Cardiac septum (tissue), 1 donor: ENCODE measurements at regions of chr6 and their contacts with region 1.

Region 1: DNA sequence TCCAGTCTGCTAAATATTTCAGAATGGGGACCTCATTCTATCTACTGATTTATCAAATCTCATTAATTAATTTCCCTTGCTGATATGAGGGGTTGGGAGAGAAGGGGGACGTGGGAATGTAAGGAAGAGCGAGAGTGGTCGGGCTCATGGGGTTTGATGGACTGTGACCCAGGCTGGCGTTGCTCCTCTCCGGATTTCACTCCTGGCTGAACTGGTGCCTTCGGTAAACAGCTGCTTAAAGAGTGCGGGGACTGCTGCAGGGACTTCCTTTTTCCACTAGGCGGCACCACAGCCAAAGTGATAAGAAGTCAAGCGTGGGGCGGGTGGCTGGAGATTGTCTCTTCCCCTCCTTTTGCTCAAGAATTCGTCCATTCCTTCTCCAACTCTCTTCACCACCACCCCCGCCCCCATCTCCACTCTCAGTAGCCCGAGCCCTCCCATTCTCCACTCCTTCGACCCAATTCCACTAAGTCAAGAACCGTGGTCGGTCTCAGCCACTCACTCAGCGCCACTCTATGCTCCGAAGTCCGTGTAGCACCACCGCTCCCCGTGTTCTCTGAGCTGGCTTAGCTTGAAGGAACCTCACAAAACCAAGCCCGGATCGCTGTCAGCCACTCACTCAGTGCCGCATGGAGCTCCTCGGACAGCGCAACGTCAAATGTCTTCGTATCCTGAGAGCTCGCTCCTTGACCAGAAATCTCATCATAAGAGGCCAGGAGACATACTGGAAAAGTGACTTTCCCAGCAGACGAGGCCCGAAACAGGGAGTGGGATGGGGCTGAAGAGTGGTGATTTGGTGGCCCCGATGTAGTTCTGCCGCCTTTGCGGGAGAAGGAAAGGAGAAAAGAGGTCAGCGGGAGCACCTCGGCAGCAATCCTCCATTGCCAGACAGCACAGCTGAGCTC is 9.7 kb downstream of the TRIM31 start:
- DNase-seq: peak; percentile 89

Region 2: DNA sequence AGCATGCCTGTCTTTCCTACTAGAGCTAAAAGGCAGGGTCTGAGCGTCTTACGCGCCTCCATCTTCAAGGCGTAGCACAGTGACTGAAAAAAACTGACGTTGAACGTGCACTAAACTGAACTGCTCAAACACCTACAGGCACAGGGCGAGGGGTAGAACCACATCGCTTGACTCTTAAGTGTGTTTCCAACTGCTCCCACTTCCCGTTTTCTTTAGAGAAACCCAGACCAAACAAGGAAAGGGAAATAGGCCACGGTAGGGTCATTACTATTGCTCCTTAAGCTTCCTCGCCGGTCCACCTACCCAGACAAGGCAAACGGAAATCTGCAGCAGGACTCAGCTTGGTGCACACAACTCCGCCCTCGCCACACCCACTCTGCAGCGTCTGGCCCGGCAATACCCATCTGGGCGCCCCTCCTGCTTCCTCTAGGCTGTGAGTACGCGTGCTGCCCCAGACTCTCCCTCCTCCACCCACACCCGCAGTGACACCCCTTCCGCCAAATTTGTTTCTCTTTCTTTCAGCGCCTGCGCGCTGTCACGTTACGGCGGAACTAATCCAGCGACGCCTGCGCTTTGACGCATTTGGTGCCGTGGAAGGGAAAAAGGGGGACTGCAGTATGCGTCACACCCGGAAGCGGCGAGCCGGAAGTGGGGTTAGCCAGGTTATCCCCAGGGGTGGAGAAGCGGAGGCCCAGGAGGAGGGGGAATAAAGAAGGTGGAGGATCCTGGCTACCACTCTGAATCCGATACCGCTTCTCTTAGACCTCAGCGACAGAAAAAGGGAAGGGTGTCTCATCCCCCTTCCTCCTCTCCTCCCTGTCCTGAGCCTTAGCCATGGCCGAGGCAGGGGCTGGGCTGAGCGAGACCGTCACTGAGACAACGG is 36.4 kb before region 1 on chr6 and contains the start of gene PPP1R11:
- intact Hi-C with region 1: loop called (anchors 2 kb)
- DNase-seq: peak; percentile 99
- total RNA-seq, gene PPP1R11: 41.4 TPM

Region 3: DNA sequence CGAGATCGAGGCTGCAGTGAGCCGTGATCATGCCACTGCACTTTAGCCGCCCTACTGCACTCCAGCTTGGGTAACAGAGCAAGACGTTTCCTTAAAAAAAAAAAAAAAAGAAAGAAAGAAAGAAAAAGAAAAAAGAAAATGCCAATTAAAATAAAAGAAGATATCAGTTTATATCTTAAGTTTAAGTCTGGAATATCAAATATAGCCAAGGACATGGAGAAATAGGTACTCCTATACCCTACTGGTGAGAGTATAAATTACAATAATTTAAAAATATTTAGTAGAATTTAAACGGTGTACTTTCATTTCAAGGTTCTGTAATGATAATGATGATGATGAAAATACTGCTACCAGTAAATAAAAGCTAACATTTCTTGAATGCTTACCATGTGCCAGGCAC is 13.5 kb after region 1 on chr6:
- intact Hi-C with region 1: no loop called
- DNase-seq: no peak

Region 4: DNA sequence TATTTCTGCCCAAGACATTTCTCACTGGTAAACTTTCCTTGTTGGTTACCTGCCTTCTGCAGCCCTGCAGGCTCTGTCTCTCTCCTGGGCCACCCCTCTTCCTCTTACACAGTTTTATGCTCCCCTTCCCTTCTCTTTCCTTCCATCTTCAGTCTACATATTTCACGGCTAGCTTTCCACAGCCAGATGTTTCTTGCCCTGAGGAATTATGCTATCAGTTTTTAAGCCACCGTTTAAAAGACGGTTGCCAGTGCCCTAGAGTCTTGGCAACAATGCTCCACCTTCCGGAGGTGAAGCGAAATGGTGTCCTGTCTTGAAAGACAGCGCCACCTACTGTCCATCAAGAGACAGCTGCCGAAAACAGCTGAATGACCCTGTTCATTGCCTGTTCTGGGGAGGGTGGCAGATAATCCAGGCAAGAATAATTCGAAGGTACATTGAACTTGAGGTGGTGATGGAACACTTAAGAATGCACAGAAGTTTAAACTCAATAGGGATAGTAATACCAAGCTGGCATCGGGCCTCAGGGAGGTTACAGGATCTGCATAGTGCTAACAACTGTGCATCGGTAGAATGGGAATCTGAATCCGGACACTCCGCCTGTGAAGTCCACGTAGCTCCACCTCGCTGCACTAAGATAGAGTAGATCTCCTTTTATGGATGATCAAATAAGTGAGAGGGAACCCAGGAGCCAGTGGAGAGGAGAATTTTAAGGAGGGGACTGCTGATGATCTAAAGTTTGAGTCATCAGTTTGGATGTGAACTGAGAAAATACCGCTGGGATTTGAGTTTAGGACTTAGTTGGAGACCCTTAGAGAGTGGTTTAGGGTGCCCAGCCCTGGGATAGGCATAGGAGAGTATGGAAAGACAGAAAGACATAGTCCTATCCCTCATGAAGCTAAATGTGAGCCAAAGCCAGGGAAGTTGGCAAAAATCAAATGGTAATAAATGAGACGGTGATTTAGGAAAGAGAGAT is 28.0 kb after region 1 on chr6:
- intact Hi-C with region 1: loop called (anchors 1 kb)
- DNase-seq: peak; percentile 82